H1 (cell line): ENCODE measurements at regions of chr4 and their contacts with region 1.

Region 1: DNA sequence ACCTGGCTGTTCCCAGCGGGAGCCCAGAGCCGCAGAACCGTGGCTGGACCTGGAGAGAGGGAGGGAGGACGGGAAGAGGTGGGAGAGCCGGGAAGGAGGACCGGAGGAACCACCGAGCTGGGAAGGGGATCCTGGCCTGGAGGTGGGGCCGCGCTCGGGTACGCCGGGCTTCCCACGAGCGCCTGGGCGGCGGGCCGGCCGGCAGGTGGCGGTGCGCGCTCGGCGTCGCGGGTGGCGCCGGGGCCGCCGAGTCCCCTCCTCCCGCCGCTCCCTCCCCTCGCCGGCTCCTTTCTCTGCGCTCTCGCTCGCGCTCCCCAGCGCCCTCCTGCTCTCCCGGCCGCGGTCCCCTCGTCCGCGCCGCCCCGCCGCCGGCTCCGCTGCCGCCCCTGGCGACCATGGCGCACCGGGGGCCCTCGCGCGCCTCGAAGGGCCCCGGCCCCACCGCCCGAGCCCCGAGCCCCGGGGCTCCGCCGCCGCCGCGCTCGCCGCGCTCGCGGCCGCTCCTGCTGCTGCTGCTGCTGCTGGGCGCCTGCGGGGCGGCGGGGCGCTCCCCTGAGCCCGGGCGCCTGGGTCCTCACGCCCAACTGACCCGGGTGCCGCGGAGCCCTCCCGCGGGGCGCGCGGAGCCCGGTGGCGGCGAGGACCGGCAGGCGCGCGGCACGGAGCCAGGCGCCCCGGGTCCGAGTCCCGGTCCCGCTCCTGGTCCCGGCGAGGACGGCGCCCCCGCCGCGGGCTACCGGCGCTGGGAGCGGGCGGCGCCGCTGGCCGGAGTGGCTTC is at the start of gene SORCS2:
- DNase-seq: peak in 1 of 2 experiments; percentile 80
- H3K4me3 ChIP-seq: peak within 1 kb of the TSS; percentile 33 to 68 (median 48)
- H3K27ac ChIP-seq: no peak within 1 kb of the TSS
- H3K4me1 ChIP-seq: peaks cover 0 to 9% (median 5%) of the 10 kb centered on the region in 4 experiments; a peak in 4 of 7 replicates
- H3K27me3 ChIP-seq: peaks cover 10 to 53% (median 35%) of the 10 kb centered on the region in 4 experiments
- CTCF ChIP-seq: peak in 2 of 3 experiments; percentile 58 to 70; a peak in 3 of 4 replicates
- EP300 ChIP-seq: 0 out of 3 replicates have a peak, but pooled peaks of 1 of the 2 experiments have one; percentile 5
- POLR2A ChIP-seq: no peak
- RAD21 ChIP-seq: peak; percentile 43 to 69
- total RNA-seq, gene SORCS2: 0.75 and 1.8 TPM in 2 replicates

Region 2: DNA sequence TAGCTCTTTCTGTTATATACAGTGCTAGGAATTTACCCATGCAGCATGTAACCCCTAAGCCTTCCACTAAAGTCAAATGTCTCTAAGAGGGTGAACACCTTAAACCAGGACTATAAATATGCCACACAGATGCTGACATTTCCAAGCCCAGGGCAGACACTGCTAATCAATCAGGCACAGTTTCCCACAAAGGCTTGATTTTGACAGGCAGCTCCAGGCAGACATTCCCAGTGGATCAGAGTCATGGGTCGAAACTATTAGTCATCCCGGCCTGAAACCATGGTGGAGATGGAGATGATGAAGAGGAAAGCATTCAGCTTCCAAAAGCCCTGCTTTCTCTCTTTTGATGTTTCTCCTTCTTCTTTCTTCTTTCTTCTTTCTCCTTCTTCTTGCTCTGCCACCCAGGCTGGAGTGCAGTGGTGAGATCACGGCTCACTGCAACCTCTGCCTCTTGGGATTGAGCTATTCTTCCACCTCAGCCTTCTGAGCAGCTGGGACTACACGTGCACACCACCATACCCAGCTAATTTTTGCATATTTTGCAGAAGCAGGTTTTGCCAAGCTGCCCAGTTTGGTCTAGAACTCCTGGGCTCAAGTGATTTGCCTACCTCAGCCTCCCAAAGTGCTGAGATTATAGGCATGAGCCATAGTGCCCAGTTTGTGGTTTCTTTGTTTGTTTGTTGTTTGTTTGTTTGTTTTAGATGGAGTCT is 21.1 kb before region 1 on chr4:
- CTCF ChIA-PET with region 1: interaction called, 11 read pairs
- POLR2A ChIA-PET with region 1: no interaction called
- DNase-seq: no peak
- H3K4me3 ChIP-seq: no peak overlapping the region
- H3K27ac ChIP-seq: no peak overlapping the region
- H3K4me1 ChIP-seq: no peaks in the 10 kb centered on the region
- H3K27me3 ChIP-seq: no peaks in the 10 kb centered on the region; a peak in 1 of 7 replicates
- CTCF ChIP-seq: no peak
- EP300 ChIP-seq: no peak
- POLR2A ChIP-seq: no peak
- RAD21 ChIP-seq: no peak

Region 3: GRCh38 chr4:7206911-7207567 is 14.6 kb after region 1 on chr4:
- CTCF ChIA-PET with region 1: interaction called, 22 read pairs
- POLR2A ChIA-PET with region 1: interaction called, 3 read pairs
- DNase-seq: no peak
- H3K4me3 ChIP-seq: no peak overlapping the region
- H3K27ac ChIP-seq: no peak overlapping the region
- H3K4me1 ChIP-seq: peaks cover 0 to 10% (median 4%) of the 10 kb centered on the region in 4 experiments; a peak in 6 of 7 replicates
- H3K27me3 ChIP-seq: 0 out of 7 replicates have a peak, but pooled peaks cover 0 to 2% (median 0%) of the 10 kb centered on the region in 4 experiments
- CTCF ChIP-seq: no peak
- EP300 ChIP-seq: no peak
- POLR2A ChIP-seq: no peak
- RAD21 ChIP-seq: no peak

Region 4: GRCh38 chr4:7295911-7296660 is 103.6 kb after region 1 on chr4:
- CTCF ChIA-PET with region 1: interaction called, 38 read pairs
- POLR2A ChIA-PET with region 1: no interaction called
- DNase-seq: peak in 1 of 2 experiments; percentile 62
- H3K4me3 ChIP-seq: no peak overlapping the region
- H3K27ac ChIP-seq: no peak overlapping the region
- H3K4me1 ChIP-seq: peaks cover 0 to 5% (median 0%) of the 10 kb centered on the region in 4 experiments; a peak in 1 of 7 replicates
- H3K27me3 ChIP-seq: no peaks in the 10 kb centered on the region
- CTCF ChIP-seq: peak in 2 of 3 experiments; percentile 52 to 57; a peak in 3 of 4 replicates
- EP300 ChIP-seq: no peak
- POLR2A ChIP-seq: no peak
- RAD21 ChIP-seq: peak; percentile 69 to 79

Region 5: GRCh38 chr4:7358100-7358735 is 165.8 kb after region 1 on chr4:
- CTCF ChIA-PET with region 1: no interaction called
- POLR2A ChIA-PET with region 1: no interaction called
- DNase-seq: no peak
- H3K4me3 ChIP-seq: no peak overlapping the region
- H3K27ac ChIP-seq: no peak overlapping the region
- H3K4me1 ChIP-seq: no peaks in the 10 kb centered on the region
- H3K27me3 ChIP-seq: no peaks in the 10 kb centered on the region
- CTCF ChIP-seq: no peak
- EP300 ChIP-seq: no peak
- POLR2A ChIP-seq: no peak
- RAD21 ChIP-seq: no peak